Mammary epithelial cell (primary cell): ENCODE measurements at regions of chr14 and their contacts with region 1.

Region 1: GRCh38 chr14:54593860-54594259 is 26.9 kb downstream of the SAMD4A start:
- DNase-seq: peak; percentile 53
- H3K4me3 ChIP-seq: no peak overlapping the region
- H3K27ac ChIP-seq: peak overlapping the region; percentile 54
- H3K4me1 ChIP-seq: peaks cover 51% of the 10 kb centered on the region
- H3K27me3 ChIP-seq: no peaks in the 10 kb centered on the region
- CTCF ChIP-seq: no peak

Region 2: GRCh38 chr14:54676812-54677708 is 83.2 kb after region 1 on chr14:
- CTCF ChIA-PET with region 1: no interaction called
- dilution Hi-C with region 1: no loop called
- in situ Hi-C with region 1: no loop called
- intact Hi-C with region 1: loop called (anchors 5 kb)
- DNase-seq: peak; percentile 93
- H3K4me3 ChIP-seq: peak overlapping the region in 2 of 3 experiments; percentile 14
- H3K27ac ChIP-seq: peak overlapping the region; percentile 93
- H3K4me1 ChIP-seq: peaks cover 32% of the 10 kb centered on the region
- H3K27me3 ChIP-seq: no peaks in the 10 kb centered on the region
- CTCF ChIP-seq: no peak

Region 3: GRCh38 chr14:54829455-54830224 is 235.8 kb after region 1 on chr14:
- CTCF ChIA-PET with region 1: no interaction called
- dilution Hi-C with region 1: no loop called
- in situ Hi-C with region 1: no loop called
- intact Hi-C with region 1: no loop called
- DNase-seq: no peak
- H3K4me3 ChIP-seq: no peak overlapping the region
- H3K27ac ChIP-seq: no peak overlapping the region
- H3K4me1 ChIP-seq: no peaks in the 10 kb centered on the region
- H3K27me3 ChIP-seq: no peaks in the 10 kb centered on the region
- CTCF ChIP-seq: no peak